Naive thymus-derived CD8-positive, alpha-beta T cell (primary cell): ENCODE measurements at regions of chr2 and their contacts with region 1.

Region 1: DNA sequence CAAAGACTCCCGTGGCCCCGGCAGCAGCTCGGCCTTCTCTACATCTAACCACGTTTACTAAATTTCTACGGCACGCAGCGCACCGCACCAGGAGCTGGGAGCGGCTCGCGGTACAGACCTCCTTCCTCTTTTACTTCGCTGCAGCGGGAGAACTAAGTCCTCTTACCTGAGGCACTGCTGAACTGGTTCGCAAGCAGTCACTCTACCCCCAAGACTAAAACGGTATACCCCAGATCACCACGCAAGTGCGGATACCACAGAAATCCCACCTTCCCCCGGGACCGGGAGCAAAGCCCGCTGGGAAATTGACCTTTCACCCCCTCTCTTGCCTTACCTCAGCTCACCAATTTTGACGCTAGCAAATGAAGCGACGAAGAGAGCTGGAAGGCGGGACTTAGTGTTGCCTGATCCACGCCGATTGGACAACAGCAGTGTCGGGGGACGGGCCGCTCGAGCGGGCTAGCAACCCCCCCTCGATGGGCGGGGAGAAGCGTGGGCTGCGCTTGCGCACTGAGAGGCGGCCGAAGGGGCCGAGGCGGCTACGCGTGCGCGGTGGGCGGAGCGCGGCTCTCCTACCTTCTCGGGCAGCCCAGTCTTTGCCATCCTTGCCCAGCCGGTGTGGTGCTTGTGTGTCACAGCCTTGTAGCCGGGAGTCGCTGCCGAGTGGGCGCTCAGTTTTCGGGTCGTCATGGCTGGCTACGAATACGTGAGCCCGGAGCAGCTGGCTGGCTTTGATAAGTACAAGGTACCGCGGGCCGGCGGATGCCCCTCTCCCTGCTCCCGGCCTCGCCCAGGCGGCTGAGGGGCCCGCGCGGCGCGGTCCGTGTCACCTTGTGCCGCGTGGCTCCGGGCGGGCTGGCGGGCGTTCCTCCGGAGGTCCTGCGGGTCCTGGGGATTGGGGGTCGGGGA is at the start of gene SELENOI:
- DNase-seq: peak; percentile 98 to 100 (median 100)
- ATAC-seq: peak; percentile 92 to 93
- H3K4me3 Mint-ChIP-seq: peak within 1 kb of the TSS; percentile 97 to 100 (median 100)
- H3K27ac Mint-ChIP-seq: peak within 1 kb of the TSS; percentile 98 to 100 (median 99)
- H3K4me1 Mint-ChIP-seq: peaks cover 20 to 53% (median 39%) of the 10 kb centered on the region in 4 donors
- H3K27me3 Mint-ChIP-seq: no peaks in the 10 kb centered on the region
- polyA plus RNA-seq, gene SELENOI: 2.6 to 4.6 (median 4.0) TPM

Region 2: DNA sequence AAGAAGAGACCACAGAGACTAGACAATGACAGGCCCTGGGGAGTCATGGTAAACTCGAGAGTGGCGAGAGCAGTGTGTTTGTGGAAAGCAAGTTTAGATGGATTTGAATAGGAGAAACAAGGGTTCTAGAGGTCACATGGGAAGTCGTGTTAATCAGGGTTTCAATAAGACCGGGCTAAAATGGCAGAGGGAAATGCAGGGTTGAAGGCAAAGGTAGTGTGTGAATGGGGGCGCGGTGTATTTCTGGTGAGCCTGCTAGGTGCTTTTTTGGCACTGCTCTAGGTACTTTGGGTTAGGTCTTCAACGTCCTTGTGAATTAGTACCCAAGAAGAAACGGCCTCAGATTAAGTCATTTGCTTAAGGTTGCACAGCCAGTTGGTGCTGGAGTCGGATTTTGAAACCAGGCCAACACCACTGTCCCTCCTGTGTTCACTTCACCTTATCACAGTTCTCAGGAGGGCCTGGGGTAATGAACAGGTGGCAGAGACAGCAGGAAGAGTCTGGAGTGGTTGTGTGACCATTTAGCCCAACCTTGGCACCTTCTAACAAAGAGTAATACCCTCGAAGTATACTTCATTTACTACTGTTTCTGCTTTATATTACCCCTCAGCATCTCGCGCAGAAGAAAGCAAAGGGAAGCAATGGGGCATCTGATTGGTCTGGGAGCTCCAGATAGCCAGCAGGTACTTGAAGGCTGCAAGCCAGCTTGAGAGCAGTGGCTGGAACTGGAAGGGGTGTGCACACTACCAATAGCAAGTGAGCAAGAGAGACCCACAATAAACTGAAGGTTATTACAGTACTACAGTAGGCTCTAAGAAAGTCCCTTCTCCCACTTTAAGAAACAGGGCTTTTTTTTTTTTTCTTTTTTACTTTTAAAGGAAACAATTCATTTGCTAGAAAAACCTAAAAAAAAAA is 206.3 kb before region 1 on chr2:
- POLR2A ChIA-PET with region 1: interaction called, 11 read pairs
- DNase-seq: no peak
- ATAC-seq: no peak
- H3K4me3 Mint-ChIP-seq: no peak overlapping the region
- H3K27ac Mint-ChIP-seq: peak overlapping the region in 4 of 10 donors; percentile 3 to 49 (median 10)
- H3K4me1 Mint-ChIP-seq: peaks cover 0 to 5% (median 0%) of the 10 kb centered on the region in 4 donors
- H3K27me3 Mint-ChIP-seq: no peaks in the 10 kb centered on the region

Region 3: DNA sequence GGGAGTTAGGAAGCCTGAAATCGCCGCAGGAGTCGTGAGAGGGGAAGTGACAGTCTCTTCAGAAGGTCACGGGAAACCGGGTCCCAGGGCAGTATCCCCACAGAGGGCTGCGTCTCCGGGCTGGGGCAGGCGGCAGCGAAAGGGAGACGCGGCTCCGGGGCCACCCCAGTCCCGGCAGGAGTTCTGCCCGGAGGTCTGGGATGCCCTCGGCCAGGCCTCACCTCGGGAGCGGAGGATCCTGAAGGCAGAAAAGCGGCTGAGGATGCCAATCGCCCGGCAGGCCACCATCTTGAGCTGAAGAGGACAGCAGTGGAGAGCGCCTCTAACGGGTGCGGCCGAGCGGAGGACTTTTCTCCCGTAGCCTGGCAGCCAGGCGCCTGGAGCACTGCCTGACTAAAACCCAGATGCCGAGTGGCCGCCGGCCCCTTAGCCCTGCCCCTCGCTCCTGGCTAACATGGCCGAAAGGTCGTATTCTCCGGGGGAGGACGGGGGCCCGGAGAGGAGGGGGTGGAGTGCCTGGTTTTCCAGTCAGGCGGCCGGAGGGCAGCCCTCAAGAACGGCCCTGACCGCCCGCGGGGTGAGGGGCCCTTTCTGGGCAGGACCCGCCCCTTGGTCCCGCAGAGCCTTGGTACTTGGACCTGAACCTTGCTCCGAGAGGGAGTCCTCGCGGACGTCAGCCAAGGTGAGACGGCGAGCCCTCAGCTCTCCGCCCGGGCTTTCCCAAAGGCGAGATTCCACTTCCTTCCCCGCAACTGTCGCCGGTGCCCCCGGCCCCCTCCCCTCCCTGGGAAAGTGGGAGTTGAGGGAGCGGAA is 101.3 kb before region 1 on chr2 and contains the starts of genes HADHA and HADHB:
- POLR2A ChIA-PET with region 1: interaction called, 20 read pairs
- DNase-seq: peak; percentile 68 to 98 (median 81)
- ATAC-seq: peak; percentile 85 to 86
- H3K4me3 Mint-ChIP-seq: peak within 1 kb of the TSS; percentile 96 to 99 (median 98)
- H3K27ac Mint-ChIP-seq: peak within 1 kb of the TSS; percentile 97 to 100 (median 99)
- H3K4me1 Mint-ChIP-seq: peaks cover 35 to 75% (median 65%) of the 10 kb centered on the region in 4 donors
- H3K27me3 Mint-ChIP-seq: no peaks in the 10 kb centered on the region
- polyA plus RNA-seq, gene HADHA: 107 to 147 (median 118) TPM
- polyA plus RNA-seq, gene HADHB: 80.2 to 93.9 (median 81.2) TPM

Region 4: GRCh38 chr2:26299471-26300101 is 46.2 kb before region 1 on chr2:
- POLR2A ChIA-PET with region 1: interaction called, 12 read pairs
- DNase-seq: peak in 6 of 10 donors; percentile 9 to 56 (median 38)
- ATAC-seq: peak; percentile 50 to 67
- H3K4me3 Mint-ChIP-seq: no peak overlapping the region
- H3K27ac Mint-ChIP-seq: no peak overlapping the region
- H3K4me1 Mint-ChIP-seq: peaks cover 0 to 5% (median 3%) of the 10 kb centered on the region in 4 donors
- H3K27me3 Mint-ChIP-seq: no peaks in the 10 kb centered on the region